HAP-1 (cell line): ENCODE measurements at regions of chr2 and their contacts with region 1.

Region 1: DNA sequence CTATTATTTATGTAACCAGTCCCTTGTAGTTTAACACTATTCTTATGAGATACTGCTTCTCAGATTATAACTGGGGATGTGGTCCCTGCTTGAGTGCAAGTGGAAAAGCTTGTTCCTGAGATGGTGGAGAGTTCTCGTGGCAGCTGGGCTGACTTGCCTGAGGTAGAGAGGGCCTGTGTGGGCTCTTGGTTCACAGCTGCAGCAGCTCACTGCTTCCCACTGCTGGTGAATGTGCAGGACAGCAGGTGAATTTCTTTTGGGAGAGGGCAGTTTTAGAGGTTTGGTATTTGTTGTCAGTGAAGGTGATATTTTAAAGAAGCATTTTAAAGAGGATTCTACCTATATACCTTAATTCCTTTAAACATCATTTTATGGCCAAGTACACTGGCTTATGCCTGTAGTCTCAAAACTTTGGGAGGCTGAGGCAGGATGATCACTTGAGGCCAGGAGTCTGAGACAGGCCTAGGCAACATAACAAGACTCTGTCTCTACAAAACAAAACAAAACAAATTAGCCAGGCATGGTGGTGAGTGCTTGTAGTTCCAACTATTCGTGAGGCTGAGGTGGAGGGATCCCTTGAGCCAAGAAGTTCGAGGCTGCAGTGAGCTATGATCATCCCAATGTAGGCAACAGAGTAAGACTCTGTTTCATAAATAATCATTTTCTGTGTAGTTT is 94.8 kb downstream of the MTA3 start:
- DNase-seq: peak; percentile 77
- H3K4me3 ChIP-seq: no peak overlapping the region
- H3K4me1 ChIP-seq: peaks cover 21% of the 10 kb centered on the region
- H3K27me3 ChIP-seq: no peaks in the 10 kb centered on the region

Region 2: DNA sequence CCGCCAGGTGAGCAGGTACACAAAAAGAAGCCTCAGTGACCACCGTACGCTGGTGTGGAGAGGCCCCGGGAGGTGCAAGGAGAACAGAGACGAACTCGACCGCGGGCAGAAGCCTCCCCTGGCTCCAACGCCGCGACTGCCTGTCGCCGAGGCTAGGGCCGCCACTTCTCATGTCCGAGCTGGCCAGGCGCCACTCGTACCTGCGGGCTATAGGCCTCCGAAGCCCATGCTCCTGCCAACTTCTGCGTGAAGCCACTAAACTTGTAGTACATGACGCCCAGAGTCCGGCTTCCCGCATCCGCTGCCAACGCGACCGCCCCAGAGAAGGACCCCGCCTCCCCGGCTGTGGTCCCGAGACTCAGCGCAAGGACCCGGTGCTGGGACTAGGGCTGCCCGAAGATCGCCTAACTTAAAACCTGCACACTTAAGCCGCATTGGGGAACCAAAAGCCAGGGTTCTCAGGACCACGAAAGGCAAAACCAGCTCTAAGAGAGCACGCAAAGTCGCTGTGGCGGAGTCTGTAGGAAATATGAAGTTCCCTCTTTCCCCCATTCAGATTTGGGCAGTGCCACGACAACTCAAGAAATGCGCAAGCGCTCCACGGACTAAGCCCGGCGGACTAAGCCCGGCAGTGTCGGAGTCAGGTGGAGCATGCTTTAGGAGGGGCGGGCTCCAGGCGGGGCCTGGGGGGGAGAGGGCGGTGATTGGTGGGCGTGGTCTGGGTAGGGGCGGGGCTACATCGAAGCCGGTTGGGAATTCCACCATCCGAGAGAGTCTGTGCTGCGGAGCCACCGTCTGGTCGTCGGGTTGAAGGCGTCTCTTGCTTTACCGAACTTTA is 302.1 kb before region 1 on chr2 and contains the start of gene COX7A2L:
- in situ Hi-C with region 1: loop called (anchors 25 kb)
- DNase-seq: peak; percentile 97 to 98
- H3K4me3 ChIP-seq: peak within 1 kb of the TSS; percentile 96
- H3K4me1 ChIP-seq: peaks cover 10% of the 10 kb centered on the region
- H3K27me3 ChIP-seq: no peaks in the 10 kb centered on the region

Region 3: GRCh38 chr2:42503291-42503690 is 160.0 kb before region 1 on chr2:
- in situ Hi-C with region 1: loop called (anchors 10 kb)
- DNase-seq: no peak
- H3K4me3 ChIP-seq: no peak overlapping the region
- H3K4me1 ChIP-seq: peaks cover 4% of the 10 kb centered on the region
- H3K27me3 ChIP-seq: no peaks in the 10 kb centered on the region

Region 4: GRCh38 chr2:43207553-43208293 is 544.5 kb after region 1 on chr2:
- in situ Hi-C with region 1: no loop called
- DNase-seq: no peak
- H3K4me3 ChIP-seq: no peak overlapping the region
- H3K4me1 ChIP-seq: no peaks in the 10 kb centered on the region
- H3K27me3 ChIP-seq: no peaks in the 10 kb centered on the region

Region 5: DNA sequence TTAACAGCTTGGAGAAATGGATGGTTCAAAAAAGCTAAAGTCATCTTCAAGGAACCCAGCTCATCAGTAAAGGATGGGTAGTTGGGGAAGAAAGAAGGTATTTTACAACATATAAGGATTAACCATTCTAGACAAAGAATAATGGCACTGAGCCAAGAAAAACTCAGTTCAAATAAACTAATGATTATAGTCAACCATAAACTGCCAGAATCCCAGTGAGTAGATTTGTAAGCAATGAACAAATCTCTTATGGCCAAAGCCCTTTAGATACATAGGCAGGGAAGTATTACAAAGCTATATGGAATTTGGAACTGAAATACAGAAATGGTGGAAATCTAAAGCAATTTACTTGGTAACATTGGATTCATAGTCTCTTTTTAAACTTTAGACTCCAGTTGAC is 655.5 kb after region 1 on chr2:
- in situ Hi-C with region 1: no loop called
- DNase-seq: peak in 1 of 2 experiments; percentile 23
- H3K4me3 ChIP-seq: no peak overlapping the region
- H3K4me1 ChIP-seq: no peaks in the 10 kb centered on the region
- H3K27me3 ChIP-seq: no peaks in the 10 kb centered on the region